ENCODE measurements at regions of chr9 and their contacts with region 1.

Region 1: DNA sequence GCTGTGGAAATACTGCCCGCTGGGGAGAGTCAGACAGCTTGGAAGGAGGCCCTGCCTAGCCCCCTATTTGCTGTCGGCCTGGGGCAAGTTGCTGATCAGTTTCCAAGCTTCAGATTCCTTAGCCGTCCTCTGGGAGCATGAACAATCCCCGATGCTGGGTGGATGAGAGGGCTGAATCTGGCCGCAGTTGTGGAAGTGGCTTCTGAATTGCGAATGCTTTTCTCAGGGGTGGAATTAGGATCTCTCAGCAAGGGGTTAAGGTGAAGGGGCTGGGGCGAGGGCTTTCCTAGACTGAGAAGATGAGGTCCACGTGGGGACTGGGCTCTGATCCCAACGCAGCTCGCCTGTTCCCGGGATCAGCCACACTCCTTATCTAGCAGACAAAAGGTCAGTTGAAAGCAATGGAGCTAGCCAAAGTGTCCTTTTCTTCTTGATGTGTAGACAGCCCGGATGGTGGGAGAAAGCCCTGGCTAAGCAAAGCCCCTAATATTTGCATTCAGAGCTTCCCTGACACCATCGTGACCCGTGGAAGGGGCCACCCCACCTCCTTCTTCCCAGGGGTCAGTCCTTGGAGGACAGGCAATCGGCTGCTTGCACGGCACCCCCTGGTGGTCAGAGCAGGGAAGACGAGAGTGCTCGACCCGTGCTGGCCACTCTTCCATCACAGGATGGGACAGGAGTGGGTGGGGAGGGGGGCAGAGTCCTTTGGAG is 54.9 kb downstream of the COL15A1 start:
- DNase-seq: peak; percentile 54
- ATAC-seq: peak; percentile 99
- H3K4me3 ChIP-seq: no peak overlapping the region
- H3K27ac ChIP-seq: no peak overlapping the region
- H3K4me1 ChIP-seq: peaks cover 0 to 3% of the 10 kb centered on the region in 2 experiments; a peak in 1 of 4 replicates
- H3K27me3 ChIP-seq: peaks cover 6% of the 10 kb centered on the region; the same call in 1 of the 2 replicates
- CTCF ChIP-seq: peak; percentile 85 to 91 (median 88)
- POLR2A ChIP-seq: no peak
- RAD21 ChIP-seq: peak; percentile 86

Region 2: GRCh38 chr9:98807070-98807810 is 191.4 kb before region 1 on chr9 and contains the start of gene GALNT12:
- CTCF ChIA-PET with region 1: interaction called, 13 read pairs
- POLR2A ChIA-PET with region 1: no interaction called
- RAD21 ChIA-PET with region 1: interaction called in 1 of 2 experiments, 4 read pairs
- intact Hi-C with region 1: no loop called
- DNase-seq: no peak
- ATAC-seq: peak; percentile 76
- H3K4me3 ChIP-seq: peak within 1 kb of the TSS; percentile 68 to 79
- H3K27ac ChIP-seq: peak within 1 kb of the TSS; percentile 66
- H3K4me1 ChIP-seq: peaks cover 31 to 52% of the 10 kb centered on the region in 2 experiments
- H3K27me3 ChIP-seq: no peaks in the 10 kb centered on the region
- CTCF ChIP-seq: no peak
- POLR2A ChIP-seq: peak; percentile 38
- RAD21 ChIP-seq: no peak
- total RNA-seq, gene GALNT12: 31.2 TPM

Region 3: GRCh38 chr9:98848450-98849149 is 150.0 kb before region 1 on chr9:
- CTCF ChIA-PET with region 1: interaction called, 55 read pairs
- POLR2A ChIA-PET with region 1: no interaction called
- RAD21 ChIA-PET with region 1: interaction called, 3 to 4 read pairs
- intact Hi-C with region 1: loop called (anchors 1 kb)
- DNase-seq: peak; percentile 93
- ATAC-seq: peak; percentile 97
- H3K4me3 ChIP-seq: no peak overlapping the region
- H3K27ac ChIP-seq: no peak overlapping the region
- H3K4me1 ChIP-seq: peaks cover 9 to 39% of the 10 kb centered on the region in 2 experiments; a peak in 3 of 4 replicates
- H3K27me3 ChIP-seq: no peaks in the 10 kb centered on the region
- CTCF ChIP-seq: peak; percentile 90 to 93 (median 91)
- POLR2A ChIP-seq: no peak
- RAD21 ChIP-seq: peak; percentile 97

Region 4: DNA sequence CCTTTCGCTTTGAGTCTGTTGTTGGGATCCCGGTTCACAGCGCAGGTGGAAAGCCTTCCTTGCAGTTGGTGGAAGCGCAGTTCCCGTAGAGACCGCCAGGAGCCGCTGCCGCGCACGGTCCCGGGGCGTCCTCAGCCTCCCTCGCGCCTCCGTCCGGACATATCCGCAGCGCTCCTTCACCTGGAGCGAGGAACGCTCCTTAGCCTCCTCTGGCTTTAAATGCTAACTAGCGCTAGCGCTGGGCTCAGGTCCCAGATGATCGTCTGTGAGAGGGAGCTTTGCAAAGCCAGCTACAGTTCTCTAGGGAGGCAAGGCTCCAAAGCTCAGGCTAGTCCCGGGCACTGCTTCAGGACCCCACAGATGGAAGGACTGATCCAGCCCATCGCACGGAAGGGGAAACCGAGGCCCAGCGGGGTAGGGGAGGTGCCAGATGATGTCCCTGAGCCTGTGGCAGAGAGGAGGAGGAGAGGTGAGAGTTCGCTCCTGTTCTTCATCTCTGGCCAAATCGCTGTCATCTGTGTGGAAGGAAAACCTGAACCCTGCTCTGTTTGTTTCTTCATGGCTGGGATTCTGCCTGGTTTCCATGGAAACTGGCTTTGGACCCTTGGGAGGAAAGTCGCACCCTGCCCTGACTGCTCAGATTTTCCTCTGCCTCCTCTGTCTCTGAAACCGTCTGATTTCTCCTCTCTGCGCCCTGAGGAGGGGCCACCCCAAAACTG is 23.4 kb before region 1 on chr9:
- CTCF ChIA-PET with region 1: interaction called, 12 read pairs
- POLR2A ChIA-PET with region 1: no interaction called
- RAD21 ChIA-PET with region 1: no interaction called
- intact Hi-C with region 1: loop called (anchors 2 kb)
- DNase-seq: peak; percentile 61
- ATAC-seq: peak; percentile 94
- H3K4me3 ChIP-seq: peak overlapping the region; percentile 11 to 48
- H3K27ac ChIP-seq: no peak overlapping the region
- H3K4me1 ChIP-seq: peaks cover 0 to 16% of the 10 kb centered on the region in 2 experiments; a peak in 2 of 4 replicates
- H3K27me3 ChIP-seq: no peaks in the 10 kb centered on the region
- CTCF ChIP-seq: peak; percentile 91 to 98 (median 97)
- POLR2A ChIP-seq: no peak
- RAD21 ChIP-seq: peak; percentile 77

Region 5: GRCh38 chr9:99058964-99059921 is 60.6 kb after region 1 on chr9:
- CTCF ChIA-PET with region 1: no interaction called
- POLR2A ChIA-PET with region 1: no interaction called
- RAD21 ChIA-PET with region 1: no interaction called
- intact Hi-C with region 1: no loop called
- DNase-seq: no peak
- ATAC-seq: no peak
- H3K4me3 ChIP-seq: no peak overlapping the region
- H3K27ac ChIP-seq: no peak overlapping the region
- H3K4me1 ChIP-seq: peaks cover 0 to 9% of the 10 kb centered on the region in 2 experiments; a peak in 1 of 4 replicates
- H3K27me3 ChIP-seq: peaks cover 20% of the 10 kb centered on the region
- CTCF ChIP-seq: no peak
- POLR2A ChIP-seq: no peak
- RAD21 ChIP-seq: no peak

Measured in HCT116 (cell line).